K562 (cell line): ENCODE measurements at regions of chr20 and their contacts with region 1.

Region 1: DNA sequence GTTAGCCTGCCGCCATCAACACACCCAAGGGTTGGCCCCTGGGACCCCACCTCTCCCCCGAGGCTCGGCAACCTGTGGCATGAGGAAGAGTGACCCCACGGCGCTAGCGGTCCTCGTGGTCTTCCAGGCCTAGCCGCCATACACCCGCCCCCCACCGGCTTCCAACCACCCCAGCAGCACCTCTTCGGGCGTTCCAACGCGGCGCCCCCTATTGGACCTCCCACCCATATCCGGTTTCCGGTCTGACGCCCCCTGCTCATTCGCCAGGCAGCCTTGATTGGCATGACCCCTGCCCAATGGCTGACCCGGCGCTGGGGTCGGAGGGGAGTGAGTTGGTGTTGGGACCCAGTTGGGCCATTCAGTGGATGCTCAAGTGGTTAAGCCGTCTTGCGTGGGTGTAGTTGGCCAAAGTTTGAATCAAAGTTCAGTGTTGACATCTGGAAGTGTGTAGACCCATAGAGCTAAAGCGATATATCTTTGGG is at the start of gene GNAS-AS1:
- DNase-seq: peak; percentile 62 to 83 (median 73)
- ATAC-seq: peak; percentile 88
- H3K4me3 ChIP-seq: peak within 1 kb of the TSS; percentile 44
- H3K27ac ChIP-seq: no peak within 1 kb of the TSS
- H3K4me1 ChIP-seq: peaks cover 0 to 36% of the 10 kb centered on the region in 2 experiments; a peak in 2 of 5 replicates
- H3K27me3 ChIP-seq: peaks cover 0 to 18% of the 10 kb centered on the region in 2 experiments; a peak in 2 of 5 replicates
- CTCF ChIP-seq: no peak
- EP300 ChIP-seq: no peak
- POLR2A ChIP-seq: no peak
- RAD21 ChIP-seq: no peak
- polyA plus RNA-seq, gene GNAS-AS1: 0.04 to 0.14 TPM

Region 2: DNA sequence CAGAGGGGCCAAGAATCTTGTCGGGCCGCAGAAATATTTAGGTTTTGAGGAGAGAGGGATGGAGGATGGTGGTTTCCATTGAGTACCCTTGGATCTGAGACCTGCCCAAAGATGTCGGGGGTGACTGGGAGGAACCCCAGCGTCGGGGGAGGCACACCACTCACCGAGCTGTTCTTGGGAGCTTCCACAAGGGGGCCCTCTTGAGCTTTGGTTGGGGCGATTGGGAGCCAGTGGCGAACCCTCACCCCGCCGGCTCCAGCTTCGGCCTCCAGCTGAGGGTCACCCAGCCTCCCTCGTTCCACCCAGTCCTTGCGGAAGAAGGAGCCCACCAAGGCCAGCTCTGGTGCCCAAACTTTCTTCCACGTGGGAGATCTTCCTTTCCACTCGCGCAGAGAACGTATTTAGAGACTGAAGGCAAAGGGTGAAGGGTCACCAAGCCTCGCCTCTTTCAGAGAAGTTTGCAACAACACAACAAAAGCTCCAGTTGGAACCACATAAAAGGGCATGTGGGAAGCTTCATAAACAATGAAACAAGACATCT is 369.2 kb before region 1 on chr20:
- CTCF ChIA-PET with region 1: interaction called, 4 read pairs
- POLR2A ChIA-PET with region 1: no interaction called
- in situ Hi-C with region 1: loop called (anchors 10 kb)
- intact Hi-C with region 1: no loop called
- DNase-seq: peak; percentile 74 to 86 (median 83)
- ATAC-seq: peak; percentile 97
- H3K4me3 ChIP-seq: no peak overlapping the region
- H3K27ac ChIP-seq: no peak overlapping the region
- H3K4me1 ChIP-seq: peaks cover 3 to 4% of the 10 kb centered on the region in 2 experiments; a peak in 3 of 5 replicates
- H3K27me3 ChIP-seq: peaks cover 8 to 24% of the 10 kb centered on the region in 2 experiments; a peak in 4 of 5 replicates
- CTCF ChIP-seq: peak; percentile 79 to 90 (median 83)
- EP300 ChIP-seq: no peak
- POLR2A ChIP-seq: no peak
- RAD21 ChIP-seq: peak; percentile 75 to 87